GM10248 (cell line): ENCODE measurements at regions of chr12 and their contacts with region 1.

Region 1: GRCh38 chr12:6367065-6367968 is 8.0 kb downstream of the SCNN1A start:
- DNase-seq: peak; percentile 80
- CTCF ChIP-seq: peak; percentile 49

Region 2: DNA sequence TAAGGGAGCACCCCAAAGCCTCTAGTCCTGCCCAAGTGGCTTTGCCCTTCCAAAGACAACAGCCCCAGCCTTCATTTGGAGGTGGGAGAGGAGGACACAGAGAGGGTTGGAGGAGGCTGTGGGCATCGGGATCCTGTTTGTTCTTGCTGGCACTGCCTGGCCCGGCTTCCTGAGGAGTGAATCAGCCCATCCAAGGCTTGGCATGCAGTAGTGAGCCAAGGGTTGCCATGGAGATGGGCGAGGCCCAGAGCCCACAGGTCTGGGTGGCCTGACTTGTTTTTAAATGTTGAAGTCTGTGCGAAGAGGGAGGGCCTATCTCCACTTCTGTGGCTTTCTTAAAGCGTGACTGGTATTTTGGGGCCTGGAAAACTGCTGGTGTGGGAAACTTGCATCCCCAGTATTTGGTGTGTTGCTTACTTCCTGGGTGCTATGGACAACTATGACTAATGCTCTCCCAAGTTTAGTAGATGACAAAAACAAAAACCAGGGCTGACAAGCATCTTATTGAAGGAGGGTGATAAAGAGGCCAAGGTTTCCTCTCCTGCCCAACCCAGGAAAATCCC is 151.3 kb before region 1 on chr12:
- CTCF ChIA-PET with region 1: no interaction called
- POLR2A ChIA-PET with region 1: no interaction called
- DNase-seq: no peak
- CTCF ChIP-seq: no peak

Region 3: DNA sequence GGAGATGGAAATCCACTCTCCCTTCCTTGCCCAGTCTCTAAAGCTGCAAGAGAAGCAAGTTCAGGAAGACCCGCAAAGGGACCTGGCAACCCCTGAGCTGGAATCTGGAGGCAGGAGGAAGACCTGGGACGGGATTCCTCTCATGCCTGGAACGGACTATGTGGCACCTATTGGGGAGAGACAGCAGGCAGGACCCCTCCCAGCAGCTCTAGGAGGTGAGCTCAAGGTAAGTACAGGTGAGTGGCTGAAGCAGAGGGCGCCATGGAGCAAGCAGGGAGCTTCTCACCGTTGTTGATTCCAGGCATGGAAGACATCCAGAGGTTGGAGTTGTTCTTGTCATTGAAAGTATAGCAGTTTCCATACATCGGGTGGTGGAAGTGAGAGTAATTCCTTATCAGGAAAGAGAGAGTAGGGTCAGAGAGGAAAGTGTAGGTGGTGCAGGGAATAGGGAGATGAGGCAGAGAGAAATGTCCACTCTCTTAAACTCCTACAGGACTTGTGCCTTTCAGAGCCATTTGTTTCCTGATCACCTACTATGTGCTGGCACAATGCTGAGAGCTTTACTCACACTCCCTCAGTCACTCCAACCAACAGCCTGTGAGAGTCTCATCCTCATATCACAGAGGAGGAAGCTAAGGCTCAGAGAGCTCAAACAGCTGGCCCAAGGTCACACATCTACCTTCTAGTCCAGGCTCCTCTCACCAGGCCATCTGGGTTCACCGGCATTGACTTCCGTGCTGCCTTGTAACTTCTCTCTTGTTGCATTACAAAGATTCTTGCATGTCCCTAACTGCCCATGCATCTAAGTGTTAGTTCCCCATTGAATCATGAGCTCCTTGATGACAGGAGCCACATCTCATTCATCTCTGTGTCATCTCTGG is 11.6 kb before region 1 on chr12:
- CTCF ChIA-PET with region 1: interaction called, 14 read pairs
- POLR2A ChIA-PET with region 1: no interaction called
- DNase-seq: no peak
- CTCF ChIP-seq: no peak